CD8-positive, alpha-beta memory T cell (primary cell): ENCODE measurements at regions of chr11 and their contacts with region 1.

Region 1: GRCh38 chr11:65569973-65570918 is at the start of gene ZNRD2:
- DNase-seq: peak; percentile 97 to 99 (median 98)
- H3K4me3 ChIP-seq: peak within 1 kb of the TSS; percentile 95
- H3K4me3 Mint-ChIP-seq: peak within 1 kb of the TSS; percentile 98 to 99 (median 99)
- H3K27ac ChIP-seq: peak within 1 kb of the TSS; percentile 96
- H3K27ac Mint-ChIP-seq: peak within 1 kb of the TSS; percentile 96 to 100 (median 100)
- H3K4me1 ChIP-seq: peaks cover 76% of the 10 kb centered on the region
- H3K4me1 Mint-ChIP-seq: peaks cover 66 to 86% (median 83%) of the 10 kb centered on the region in 3 donors
- H3K27me3 ChIP-seq: no peaks in the 10 kb centered on the region
- H3K27me3 Mint-ChIP-seq: peaks cover 0 to 1% of the 10 kb centered on the region in 2 donors
- total RNA-seq, gene ZNRD2: 69.6 to 77.9 TPM

Region 2: GRCh38 chr11:65366340-65366773 is 203.9 kb before region 1 on chr11:
- CTCF ChIA-PET with region 1: no interaction called
- POLR2A ChIA-PET with region 1: no interaction called
- DNase-seq: peak in 4 of 5 donors; percentile 22 to 61 (median 60)
- H3K4me3 ChIP-seq: no peak overlapping the region
- H3K4me3 Mint-ChIP-seq: no peak overlapping the region
- H3K27ac ChIP-seq: no peak overlapping the region
- H3K27ac Mint-ChIP-seq: no peak overlapping the region
- H3K4me1 ChIP-seq: no peaks in the 10 kb centered on the region
- H3K4me1 Mint-ChIP-seq: peaks cover 0 to 7% (median 0%) of the 10 kb centered on the region in 3 donors
- H3K27me3 ChIP-seq: no peaks in the 10 kb centered on the region
- H3K27me3 Mint-ChIP-seq: no peaks in the 10 kb centered on the region

Region 3: GRCh38 chr11:65540297-65541092 is 29.8 kb before region 1 on chr11:
- CTCF ChIA-PET with region 1: interaction called, 78 read pairs
- POLR2A ChIA-PET with region 1: interaction called, 34 read pairs
- DNase-seq: peak; percentile 82 to 92 (median 89)
- H3K4me3 ChIP-seq: peak overlapping the region; percentile 74
- H3K4me3 Mint-ChIP-seq: peak overlapping the region; percentile 82 to 94 (median 87)
- H3K27ac ChIP-seq: peak overlapping the region; percentile 44
- H3K27ac Mint-ChIP-seq: peak overlapping the region; percentile 78 to 93 (median 84)
- H3K4me1 ChIP-seq: peaks cover 11% of the 10 kb centered on the region
- H3K4me1 Mint-ChIP-seq: peaks cover 13 to 20% (median 14%) of the 10 kb centered on the region in 3 donors
- H3K27me3 ChIP-seq: no peaks in the 10 kb centered on the region
- H3K27me3 Mint-ChIP-seq: no peaks in the 10 kb centered on the region

Region 4: DNA sequence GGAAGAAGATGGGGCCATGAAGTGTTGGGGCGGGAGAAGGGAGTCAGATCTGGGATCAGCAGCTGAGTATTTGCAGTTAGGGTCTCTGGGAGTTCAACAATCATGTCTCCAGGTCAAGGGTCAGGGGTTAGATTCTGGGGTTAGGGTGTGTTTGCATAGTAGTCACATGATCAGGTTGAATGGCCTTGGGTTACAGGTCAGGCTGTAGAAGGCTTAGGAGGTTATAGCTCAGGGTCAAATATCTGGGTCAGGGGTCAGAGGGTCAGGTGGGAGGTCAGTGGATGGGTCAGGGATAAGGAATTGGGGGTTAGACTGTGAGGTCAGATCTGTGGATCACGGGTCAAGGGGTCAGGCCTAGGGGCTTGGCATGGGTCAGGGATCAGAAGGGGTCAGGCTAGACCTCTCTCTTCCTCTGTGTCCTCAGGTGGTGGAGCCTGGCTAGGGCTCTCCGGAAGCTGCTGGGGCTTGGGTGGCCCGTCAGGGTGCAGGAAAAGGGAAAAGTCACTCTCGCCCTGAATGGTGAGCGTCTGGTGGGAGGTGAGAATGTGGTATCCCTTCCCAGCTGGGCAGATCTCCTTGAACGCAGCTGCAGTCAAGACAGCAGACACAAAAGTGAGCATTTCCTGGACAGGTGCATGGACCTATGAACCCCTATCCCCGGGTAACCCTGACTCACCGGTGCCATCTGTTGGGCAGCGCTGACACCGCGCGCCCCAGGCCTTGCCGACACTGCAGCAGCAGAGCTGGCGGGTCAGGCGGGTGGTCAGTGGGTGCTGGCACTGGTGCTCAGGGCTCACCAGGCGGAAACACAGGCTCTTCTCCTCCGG is 18.5 kb before region 1 on chr11:
- CTCF ChIA-PET with region 1: interaction called, 35 read pairs
- POLR2A ChIA-PET with region 1: interaction called, 17 read pairs
- DNase-seq: peak; percentile 43 to 73 (median 54)
- H3K4me3 ChIP-seq: peak overlapping the region; percentile 17
- H3K4me3 Mint-ChIP-seq: peak overlapping the region in 5 of 7 donors; percentile 3 to 32 (median 13)
- H3K27ac ChIP-seq: no peak overlapping the region
- H3K27ac Mint-ChIP-seq: peak overlapping the region; percentile 51 to 97 (median 80)
- H3K4me1 ChIP-seq: peaks cover 75% of the 10 kb centered on the region
- H3K4me1 Mint-ChIP-seq: peaks cover 56 to 77% (median 62%) of the 10 kb centered on the region in 3 donors
- H3K27me3 ChIP-seq: no peaks in the 10 kb centered on the region
- H3K27me3 Mint-ChIP-seq: no peaks in the 10 kb centered on the region

Region 5: DNA sequence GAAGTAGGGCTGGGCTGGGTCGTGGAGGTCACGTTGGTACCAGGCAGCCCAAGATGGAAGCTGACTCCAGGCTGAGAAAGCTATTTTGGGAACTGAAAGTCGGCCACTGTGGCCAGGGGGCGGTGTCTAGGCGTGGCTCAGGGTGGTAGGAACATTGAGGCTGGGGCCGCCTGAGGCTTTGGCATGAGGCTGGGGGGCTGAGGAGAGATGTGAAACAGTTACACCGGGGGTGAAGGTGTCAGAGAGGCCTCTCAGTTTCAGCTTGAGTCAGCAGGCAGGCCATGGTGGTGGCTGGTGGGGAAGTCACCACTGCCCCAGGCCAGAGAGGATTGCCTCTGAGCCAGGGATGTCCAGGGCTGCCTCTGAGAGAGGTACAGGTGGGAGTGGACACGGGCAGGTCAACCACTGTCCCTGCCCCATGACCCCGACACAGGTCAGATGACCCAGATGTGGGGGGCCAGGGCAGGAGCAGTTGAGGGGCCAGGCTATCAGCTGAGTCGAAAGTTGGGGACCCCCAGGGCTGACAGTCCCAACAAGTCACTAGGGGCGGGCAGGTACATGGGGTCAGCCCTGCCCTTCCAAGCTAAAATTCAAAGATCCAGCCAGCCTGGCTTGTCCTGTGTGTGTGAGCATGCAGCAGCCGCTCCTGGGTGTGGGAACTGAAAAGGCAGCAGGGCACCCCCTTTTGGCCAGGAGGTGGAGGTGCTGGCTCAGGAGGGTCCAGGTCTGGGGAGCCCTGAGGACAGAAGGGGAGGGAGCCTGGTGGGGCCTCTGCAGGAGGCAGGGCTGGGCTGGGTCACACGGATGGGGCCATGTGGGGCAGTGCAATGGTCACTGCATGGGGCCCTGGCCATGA is 18.2 kb after region 1 on chr11:
- CTCF ChIA-PET with region 1: interaction called, 66 read pairs
- POLR2A ChIA-PET with region 1: interaction called, 32 read pairs
- DNase-seq: peak; percentile 63 to 88 (median 75)
- H3K4me3 ChIP-seq: no peak overlapping the region
- H3K4me3 Mint-ChIP-seq: peak overlapping the region in 4 of 7 donors; percentile 19 to 57 (median 40)
- H3K27ac ChIP-seq: no peak overlapping the region
- H3K27ac Mint-ChIP-seq: peak overlapping the region; percentile 81 to 97 (median 88)
- H3K4me1 ChIP-seq: peaks cover 17% of the 10 kb centered on the region
- H3K4me1 Mint-ChIP-seq: peaks cover 18 to 29% (median 23%) of the 10 kb centered on the region in 3 donors
- H3K27me3 ChIP-seq: no peaks in the 10 kb centered on the region
- H3K27me3 Mint-ChIP-seq: no peaks in the 10 kb centered on the region